WTC11 (cell line): ENCODE measurements at regions of chr3 and their contacts with region 1.

Region 1: DNA sequence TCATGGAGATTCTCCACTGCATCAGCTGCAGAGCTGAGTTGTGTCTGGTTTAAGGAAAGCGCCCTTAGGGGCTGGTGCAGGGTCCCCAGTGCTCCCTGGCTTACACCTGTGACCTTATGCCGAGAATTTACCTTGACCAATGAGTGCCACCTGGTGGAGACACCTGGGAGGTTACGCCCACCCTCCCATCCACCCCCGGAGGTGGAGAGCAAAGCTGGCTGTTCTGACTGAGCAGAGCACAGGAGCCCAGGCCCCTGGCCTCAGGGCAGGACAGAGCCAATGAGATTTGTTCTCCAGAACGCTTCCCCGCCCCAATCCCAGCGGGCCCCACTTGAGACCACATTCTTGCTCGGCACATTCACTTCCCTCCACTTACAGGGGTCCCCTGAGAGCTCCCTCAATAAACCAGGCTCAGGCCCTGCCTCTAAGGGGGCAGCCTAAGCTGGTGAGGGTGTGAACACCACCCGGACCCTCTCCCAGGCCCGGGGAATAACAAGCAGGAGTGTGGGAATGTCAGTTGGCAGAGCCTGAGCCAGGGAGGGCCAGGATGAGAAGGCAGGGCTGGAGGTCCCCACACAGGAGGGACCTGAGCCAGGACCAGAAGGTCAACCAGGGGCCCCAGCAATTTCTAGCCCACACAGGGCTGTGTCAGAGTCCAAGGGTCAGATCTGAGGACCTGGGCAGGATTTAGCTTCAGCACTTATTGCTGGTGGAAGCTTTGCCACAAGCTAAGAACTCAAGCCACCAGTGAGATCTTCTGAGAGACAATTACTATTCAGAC is 117.1 kb downstream of the TPRA1 start:
- DNase-seq: peak; percentile 87
- ATAC-seq: peak; percentile 99
- H3K4me3 Mint-ChIP-seq: no peak overlapping the region
- H3K27ac Mint-ChIP-seq: no peak overlapping the region
- H3K4me1 Mint-ChIP-seq: no peaks in the 10 kb centered on the region
- H3K27me3 Mint-ChIP-seq: no peaks in the 10 kb centered on the region; the same call in 1 of the 2 replicates
- CTCF ChIP-seq: peak; percentile 61

Region 2: DNA sequence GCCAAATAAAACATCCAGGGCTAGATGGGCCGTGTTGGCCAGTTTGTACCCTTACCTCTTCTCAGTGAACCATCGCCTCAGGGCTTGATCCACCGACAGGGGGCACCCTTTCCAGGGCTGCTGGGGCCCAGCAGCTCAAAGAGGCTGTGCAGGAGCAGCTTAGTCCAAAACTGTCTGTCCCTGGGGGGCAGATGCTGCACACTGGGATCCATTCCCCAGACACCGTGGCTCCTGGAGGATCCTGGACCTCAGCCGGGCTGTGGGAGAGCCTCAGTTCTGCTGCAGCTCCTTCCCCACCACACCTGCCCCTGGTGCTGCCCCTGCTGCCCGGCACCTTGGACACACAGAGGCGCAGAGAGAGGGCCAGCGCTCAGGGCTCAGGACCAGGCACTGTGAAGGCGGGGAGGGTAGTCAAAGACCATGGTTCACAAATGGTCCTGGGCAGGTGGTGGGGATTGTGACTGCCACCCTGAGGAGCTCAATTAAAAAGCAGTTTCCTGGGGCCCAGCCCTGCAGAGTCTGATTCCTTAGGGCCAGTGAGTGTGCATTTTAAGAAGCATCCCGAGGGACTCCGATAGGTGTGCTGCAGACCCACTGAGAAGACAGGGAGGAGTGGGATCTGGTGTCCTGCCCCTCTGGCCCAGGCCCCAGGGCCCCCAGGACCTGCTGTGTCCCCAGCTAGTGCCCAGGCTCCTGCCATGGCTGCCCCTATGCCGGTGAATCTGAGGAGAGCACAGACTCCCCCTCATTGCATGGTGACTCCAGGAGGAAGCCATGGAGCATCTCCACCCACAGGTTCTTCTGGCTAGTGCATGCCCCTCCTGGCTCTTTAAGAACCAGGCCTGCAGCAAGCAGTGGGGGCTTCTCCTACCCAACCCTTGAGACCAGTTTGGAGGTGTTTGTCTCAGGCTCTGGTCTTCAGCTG is 99.1 kb before region 1 on chr3:
- CTCF ChIA-PET with region 1: interaction called, 14 read pairs
- POLR2A ChIA-PET with region 1: interaction called, 3 read pairs
- DNase-seq: peak; percentile 79
- ATAC-seq: peak; percentile 77
- H3K4me3 Mint-ChIP-seq: no peak overlapping the region
- H3K27ac Mint-ChIP-seq: no peak overlapping the region
- H3K4me1 Mint-ChIP-seq: peaks cover 5% of the 10 kb centered on the region; the same call in 1 of the 2 replicates
- H3K27me3 Mint-ChIP-seq: no peaks in the 10 kb centered on the region
- CTCF ChIP-seq: peak; percentile 60

Region 3: GRCh38 chr3:127483902-127484591 is 10.6 kb after region 1 on chr3:
- CTCF ChIA-PET with region 1: interaction called, 17 read pairs
- POLR2A ChIA-PET with region 1: no interaction called
- DNase-seq: no peak
- ATAC-seq: no peak
- H3K4me3 Mint-ChIP-seq: no peak overlapping the region
- H3K27ac Mint-ChIP-seq: no peak overlapping the region
- H3K4me1 Mint-ChIP-seq: peaks cover 13% of the 10 kb centered on the region
- H3K27me3 Mint-ChIP-seq: no peaks in the 10 kb centered on the region
- CTCF ChIP-seq: no peak

Region 4: DNA sequence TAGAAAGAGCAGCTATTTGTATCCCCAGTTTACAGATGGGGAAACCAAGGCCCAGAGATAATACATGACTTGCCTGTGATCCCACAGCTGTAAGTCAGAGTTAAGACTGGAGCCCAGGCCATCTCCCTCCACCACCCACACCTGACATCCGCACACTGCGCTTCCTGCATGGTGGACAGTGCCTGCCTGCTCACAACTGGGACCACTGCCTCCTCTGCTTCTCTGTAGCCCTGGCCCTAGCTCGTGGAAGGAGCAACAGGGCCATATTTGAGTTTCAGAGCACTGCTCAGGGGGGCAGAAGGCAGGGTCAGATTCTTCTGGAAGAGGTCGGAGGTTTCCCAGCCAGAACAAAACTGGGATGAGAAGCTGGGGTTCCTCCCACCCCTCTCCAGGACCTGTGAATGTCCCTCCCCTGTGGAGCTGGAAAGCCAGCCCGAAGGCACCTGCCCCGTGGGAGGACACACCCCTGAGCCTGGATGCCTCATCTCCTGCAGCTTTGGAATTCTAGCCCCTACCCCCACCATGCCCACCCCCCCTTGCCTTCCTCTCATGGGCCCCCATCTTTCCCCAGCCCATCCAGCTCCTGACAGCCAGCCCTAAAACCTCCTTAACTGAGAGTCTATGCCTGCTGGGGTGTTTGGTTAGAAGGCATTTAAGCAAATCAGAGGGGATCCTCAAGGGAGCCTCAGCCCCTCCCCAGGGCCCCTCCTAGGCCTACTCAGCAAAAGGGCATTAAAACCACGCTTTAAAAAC is 17.0 kb after region 1 on chr3:
- CTCF ChIA-PET with region 1: interaction called, 17 read pairs
- POLR2A ChIA-PET with region 1: no interaction called
- DNase-seq: no peak
- ATAC-seq: no peak
- H3K4me3 Mint-ChIP-seq: no peak overlapping the region
- H3K27ac Mint-ChIP-seq: no peak overlapping the region
- H3K4me1 Mint-ChIP-seq: peaks cover 14% of the 10 kb centered on the region
- H3K27me3 Mint-ChIP-seq: peaks cover 3% of the 10 kb centered on the region; the same call in 1 of the 2 replicates
- CTCF ChIP-seq: no peak

Region 5: GRCh38 chr3:127544192-127544802 is 70.9 kb after region 1 on chr3:
- CTCF ChIA-PET with region 1: interaction called, 65 read pairs
- POLR2A ChIA-PET with region 1: no interaction called
- DNase-seq: peak; percentile 87
- ATAC-seq: peak; percentile 59
- H3K4me3 Mint-ChIP-seq: no peak overlapping the region
- H3K27ac Mint-ChIP-seq: no peak overlapping the region
- H3K4me1 Mint-ChIP-seq: peaks cover 16% of the 10 kb centered on the region
- H3K27me3 Mint-ChIP-seq: peaks cover 8% of the 10 kb centered on the region; the same call in 1 of the 2 replicates
- CTCF ChIP-seq: peak; percentile 83

Region 6: DNA sequence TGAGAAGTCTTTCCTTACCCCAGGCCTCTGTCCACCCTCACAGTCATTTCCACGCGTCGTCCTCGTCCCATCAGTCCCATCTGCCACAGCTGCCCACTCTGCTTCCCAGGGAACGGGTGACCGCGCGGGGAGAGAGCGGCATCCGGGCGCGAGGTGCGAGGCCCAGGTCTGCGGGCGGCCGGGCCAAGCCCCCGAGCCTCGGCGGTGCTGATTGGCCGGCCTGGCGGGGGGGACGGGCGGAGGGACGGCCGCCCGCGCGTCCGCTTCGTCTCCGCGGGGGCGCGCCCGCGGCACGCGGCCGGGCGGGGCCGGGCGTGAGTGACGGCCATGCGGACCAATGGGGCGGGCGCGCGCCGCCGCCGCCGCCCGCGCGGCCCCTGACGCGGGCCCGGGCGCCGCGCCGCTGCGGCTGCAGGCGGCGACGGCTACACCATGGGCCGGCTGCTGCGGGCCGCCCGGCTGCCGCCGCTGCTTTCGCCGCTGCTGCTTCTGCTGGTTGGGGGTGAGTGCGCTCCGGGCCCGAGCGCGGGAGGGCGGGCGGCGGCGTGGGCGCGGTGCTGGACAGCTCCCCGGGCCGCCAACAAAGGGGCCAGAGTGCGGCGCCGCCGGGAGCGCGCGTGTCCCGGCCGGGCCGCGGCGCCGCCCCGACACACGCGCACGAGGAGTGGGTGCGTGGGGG is 155.5 kb after region 1 on chr3 and contains the start of gene PODXL2:
- CTCF ChIA-PET with region 1: no interaction called
- POLR2A ChIA-PET with region 1: no interaction called
- DNase-seq: peak; percentile 59
- ATAC-seq: peak; percentile 89
- H3K4me3 Mint-ChIP-seq: peak within 1 kb of the TSS; percentile 70
- H3K27ac Mint-ChIP-seq: no peak within 1 kb of the TSS
- H3K4me1 Mint-ChIP-seq: peaks cover 31% of the 10 kb centered on the region
- H3K27me3 Mint-ChIP-seq: peaks cover 50% of the 10 kb centered on the region
- CTCF ChIP-seq: no peak
- total RNA-seq, gene PODXL2: 33.6 to 38.8 TPM (median 37.8 TPM) in 3 replicates